ENCODE measurements at regions of chr6 and their contacts with region 1.

Region 1: GRCh38 chr6:87815449-87815848 is 113.4 kb upstream of the AKIRIN2 start:
- DNase-seq: no peak
- H3K4me3 ChIP-seq: no peak overlapping the region
- H3K27ac ChIP-seq: no peak overlapping the region
- H3K4me1 ChIP-seq: peaks cover 10% of the 10 kb centered on the region
- H3K27me3 ChIP-seq: no peaks in the 10 kb centered on the region
- CTCF ChIP-seq: no peak

Region 2: GRCh38 chr6:87583822-87584221 is 231.6 kb before region 1 on chr6:
- CTCF ChIA-PET with region 1: no interaction called
- dilution Hi-C with region 1: no loop called
- in situ Hi-C with region 1: no loop called
- intact Hi-C with region 1: loop called (anchors 1 kb)
- DNase-seq: no peak
- H3K4me3 ChIP-seq: no peak overlapping the region
- H3K27ac ChIP-seq: no peak overlapping the region
- H3K4me1 ChIP-seq: peaks cover 4% of the 10 kb centered on the region
- H3K27me3 ChIP-seq: no peaks in the 10 kb centered on the region
- CTCF ChIP-seq: no peak

Region 3: GRCh38 chr6:87848574-87848973 is 33.1 kb after region 1 on chr6:
- CTCF ChIA-PET with region 1: no interaction called
- dilution Hi-C with region 1: no loop called
- in situ Hi-C with region 1: no loop called
- intact Hi-C with region 1: no loop called
- DNase-seq: peak; percentile 3
- H3K4me3 ChIP-seq: no peak overlapping the region
- H3K27ac ChIP-seq: no peak overlapping the region
- H3K4me1 ChIP-seq: no peaks in the 10 kb centered on the region
- H3K27me3 ChIP-seq: peaks cover 10% of the 10 kb centered on the region
- CTCF ChIP-seq: no peak

Measured in mammary epithelial cell (primary cell).